Left ventricle myocardium superior (tissue), 1 donor: ENCODE measurements at regions of chr17 and their contacts with region 1.

Region 1: GRCh38 chr17:36629252-36629847 is 28.0 kb downstream of the MRM1 start:
- DNase-seq: peak; percentile 81
- ATAC-seq: peak; percentile 94

Region 2: GRCh38 chr17:36665417-36665816 is 36.1 kb after region 1 on chr17:
- intact Hi-C with region 1: no loop called
- DNase-seq: no peak
- ATAC-seq: no peak

Region 3: GRCh38 chr17:37047631-37048104 is 418.3 kb after region 1 on chr17:
- intact Hi-C with region 1: loop called (anchors 5 kb)
- DNase-seq: peak; percentile 82
- ATAC-seq: peak; percentile 74